ENCODE measurements at regions of chr6 and their contacts with region 1.

Region 1: GRCh38 chr6:138588805-138589434 is 89.6 kb upstream of the NHSL1 start:
- DNase-seq: peak; percentile 78
- H3K4me3 ChIP-seq: no peak overlapping the region
- H3K27ac ChIP-seq: no peak overlapping the region
- H3K4me1 ChIP-seq: peaks cover 21% of the 10 kb centered on the region
- H3K27me3 ChIP-seq: no peaks in the 10 kb centered on the region
- CTCF ChIP-seq: peak; percentile 80 to 85
- POLR2A ChIP-seq: no peak

Region 2: DNA sequence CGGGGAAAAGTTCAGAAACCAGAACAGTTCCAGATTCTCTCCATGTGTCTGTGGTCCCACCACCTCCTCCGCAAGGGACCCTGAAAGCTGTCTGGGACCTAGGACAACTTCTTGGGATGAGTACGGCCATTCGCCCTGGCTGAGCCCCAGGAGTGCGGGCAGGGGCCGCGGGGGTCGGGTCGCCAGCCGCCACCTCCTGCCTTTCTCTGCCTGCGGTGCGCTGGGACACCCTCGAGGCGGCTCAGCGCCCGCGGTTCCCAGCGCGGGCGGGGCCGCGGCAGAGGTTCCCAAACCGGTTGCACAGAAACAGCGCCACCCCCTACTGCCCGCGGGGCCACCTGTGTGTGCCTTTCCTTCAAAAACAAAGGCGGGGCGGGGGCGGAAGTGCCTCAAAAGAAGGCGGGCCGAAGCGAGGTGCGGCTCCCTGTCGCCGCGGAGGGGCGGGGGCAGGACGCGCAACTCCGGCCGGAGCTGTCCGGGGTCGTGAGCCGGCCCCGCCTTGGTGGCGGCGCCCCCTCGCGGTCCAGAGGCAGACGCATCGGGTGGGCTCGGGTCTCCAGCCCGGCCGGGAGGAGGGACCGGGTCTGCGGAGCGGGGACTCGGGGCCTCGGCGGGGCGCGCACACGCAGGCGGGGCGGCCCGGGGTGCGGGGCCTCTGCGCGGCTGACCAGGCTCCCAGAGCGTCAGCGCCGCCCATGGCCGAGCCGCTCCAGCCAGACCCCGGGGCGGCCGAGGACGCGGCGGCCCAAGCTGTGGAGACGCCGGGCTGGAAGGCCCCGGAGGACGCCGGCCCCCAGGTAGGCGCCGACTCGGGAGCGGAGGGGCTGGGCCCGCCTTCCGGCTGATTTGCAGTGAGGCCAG is 184.9 kb before region 1 on chr6 and contains the start of gene HEBP2:
- CTCF ChIA-PET with region 1: no interaction called
- POLR2A ChIA-PET with region 1: no interaction called
- dilution Hi-C with region 1: no loop called
- intact Hi-C with region 1: loop called (anchors 2 kb)
- DNase-seq: peak; percentile 86
- H3K4me3 ChIP-seq: peak within 1 kb of the TSS; percentile 51 to 78 (median 76)
- H3K27ac ChIP-seq: peak within 1 kb of the TSS; percentile 76
- H3K4me1 ChIP-seq: peaks cover 11% of the 10 kb centered on the region
- H3K27me3 ChIP-seq: no peaks in the 10 kb centered on the region
- CTCF ChIP-seq: peak; percentile 53 to 66
- POLR2A ChIP-seq: peak; percentile 61
- total RNA-seq, gene HEBP2: 75.3 and 81.2 TPM in 2 replicates

Region 3: DNA sequence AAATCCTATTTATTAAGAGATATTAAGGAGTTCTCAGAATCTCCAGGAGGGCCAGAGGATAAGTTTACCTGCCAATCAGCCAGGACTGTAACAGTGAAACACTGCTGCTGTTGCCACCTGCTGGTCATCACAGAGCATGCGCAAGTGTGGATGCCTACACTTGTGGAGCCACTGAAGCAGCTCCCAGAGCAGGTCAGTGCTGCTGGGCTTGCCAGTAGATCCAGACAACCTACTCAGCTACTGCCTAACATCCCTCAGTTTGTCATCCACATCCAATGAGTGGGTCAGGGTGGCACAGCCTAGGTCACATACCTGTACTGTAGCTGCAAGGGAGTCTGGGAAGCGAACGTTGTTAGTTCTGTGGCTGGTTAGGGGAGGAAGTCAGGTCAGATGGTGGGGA is 71.3 kb before region 1 on chr6:
- CTCF ChIA-PET with region 1: interaction called, 4 read pairs
- POLR2A ChIA-PET with region 1: no interaction called
- dilution Hi-C with region 1: no loop called
- intact Hi-C with region 1: loop called (anchors 2 kb)
- DNase-seq: peak; percentile 35
- H3K4me3 ChIP-seq: no peak overlapping the region
- H3K27ac ChIP-seq: no peak overlapping the region
- H3K4me1 ChIP-seq: peaks cover 12% of the 10 kb centered on the region
- H3K27me3 ChIP-seq: no peaks in the 10 kb centered on the region
- CTCF ChIP-seq: peak; percentile 67 to 77
- POLR2A ChIP-seq: no peak

Region 4: GRCh38 chr6:138654715-138655634 is 66.1 kb after region 1 on chr6:
- CTCF ChIA-PET with region 1: interaction called, 4 read pairs
- POLR2A ChIA-PET with region 1: no interaction called
- dilution Hi-C with region 1: no loop called
- intact Hi-C with region 1: loop called (anchors 1 kb)
- DNase-seq: peak; percentile 82
- H3K4me3 ChIP-seq: peak overlapping the region in 1 of 3 experiments; percentile 20
- H3K27ac ChIP-seq: peak overlapping the region; percentile 75
- H3K4me1 ChIP-seq: peaks cover 30% of the 10 kb centered on the region
- H3K27me3 ChIP-seq: no peaks in the 10 kb centered on the region
- CTCF ChIP-seq: no peak
- POLR2A ChIP-seq: no peak

Region 5: GRCh38 chr6:138765896-138766655 is 177.2 kb after region 1 on chr6:
- CTCF ChIA-PET with region 1: interaction called, 63 read pairs
- POLR2A ChIA-PET with region 1: no interaction called
- dilution Hi-C with region 1: no loop called
- intact Hi-C with region 1: loop called (anchors 1 kb)
- DNase-seq: peak; percentile 64
- H3K4me3 ChIP-seq: no peak overlapping the region
- H3K27ac ChIP-seq: no peak overlapping the region
- H3K4me1 ChIP-seq: peaks cover 32% of the 10 kb centered on the region
- H3K27me3 ChIP-seq: no peaks in the 10 kb centered on the region
- CTCF ChIP-seq: peak; percentile 22 to 40
- POLR2A ChIP-seq: no peak

Region 6: DNA sequence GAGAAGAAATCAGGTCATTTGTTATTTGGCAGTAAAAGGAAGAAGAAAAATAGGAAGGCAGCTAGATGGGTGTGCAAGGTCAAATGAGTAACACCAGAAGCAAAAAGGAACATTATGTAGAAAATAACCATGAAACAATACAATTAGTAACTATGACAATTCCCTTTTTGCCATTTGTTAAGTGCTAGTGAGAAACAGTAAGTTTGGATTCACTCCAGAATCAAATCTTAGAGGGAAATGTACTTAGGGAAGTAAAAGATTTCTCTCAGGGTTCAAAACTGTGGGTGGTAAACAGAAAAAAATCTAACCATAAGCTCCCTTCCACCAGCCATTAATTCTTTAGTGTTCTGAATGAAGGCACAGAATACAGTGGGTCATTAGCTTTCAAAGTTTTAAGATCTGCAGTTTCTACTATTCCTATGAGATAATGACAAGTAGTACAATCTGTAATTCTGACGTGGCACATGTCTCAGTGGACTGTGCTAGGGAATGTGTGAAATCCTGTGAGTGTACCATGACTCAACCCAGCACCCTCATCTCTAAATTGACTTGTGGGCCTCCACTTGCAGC is 382.0 kb after region 1 on chr6:
- CTCF ChIA-PET with region 1: no interaction called
- POLR2A ChIA-PET with region 1: no interaction called
- dilution Hi-C with region 1: no loop called
- intact Hi-C with region 1: loop called (anchors 5 kb)
- DNase-seq: peak; percentile 85
- H3K4me3 ChIP-seq: peak overlapping the region in 1 of 3 experiments; percentile 27
- H3K27ac ChIP-seq: peak overlapping the region; percentile 91
- H3K4me1 ChIP-seq: peaks cover 48% of the 10 kb centered on the region
- H3K27me3 ChIP-seq: no peaks in the 10 kb centered on the region
- CTCF ChIP-seq: no peak
- POLR2A ChIP-seq: no peak